H1 (cell line): ENCODE measurements at regions of chr1 and their contacts with region 1.

Region 1: DNA sequence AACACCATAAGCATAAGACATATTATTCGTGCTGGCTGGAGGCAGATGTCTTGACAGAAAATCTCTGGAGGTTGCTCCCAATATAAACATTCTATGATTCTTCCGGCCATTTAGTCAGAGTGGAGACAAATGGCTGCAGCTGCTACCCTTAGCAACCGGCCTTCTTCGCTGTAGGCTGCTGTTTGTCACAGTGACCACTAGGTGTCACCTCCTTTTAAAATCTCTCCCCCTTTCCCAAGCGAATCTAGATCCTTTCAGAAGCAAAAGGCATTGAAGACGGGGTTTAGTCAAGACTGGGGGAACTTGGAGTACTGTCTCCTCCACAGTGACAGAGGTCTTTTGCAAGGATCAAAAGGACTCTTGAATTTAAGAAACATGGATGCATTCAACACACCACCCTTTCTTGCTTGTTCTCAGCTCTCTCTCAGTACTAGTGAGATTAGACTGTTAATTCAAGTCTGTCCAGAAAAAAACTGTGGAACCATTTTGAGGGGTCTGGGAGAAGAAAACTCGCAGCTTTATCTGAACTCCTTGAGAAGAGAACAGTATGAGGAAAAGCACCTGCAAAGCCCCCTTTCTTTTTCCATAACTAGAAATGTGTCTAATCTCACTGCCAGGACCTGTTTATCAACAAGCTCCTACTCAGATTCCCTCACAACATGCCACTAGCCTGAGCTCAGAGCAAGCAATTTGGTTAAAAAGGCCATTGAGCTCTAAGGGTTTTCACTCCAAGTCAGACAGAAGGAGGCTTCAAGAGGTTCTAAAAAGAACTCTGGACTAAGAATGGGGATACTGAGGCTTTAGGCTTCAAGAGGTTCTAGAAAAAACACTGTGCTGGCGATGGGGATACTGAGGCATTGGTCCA is 408.3 kb upstream of the PLXNA2 start:
- DNase-seq: peak; percentile 25 to 53
- H3K4me3 ChIP-seq: no peak overlapping the region
- H3K27ac ChIP-seq: no peak overlapping the region
- H3K4me1 ChIP-seq: no peaks in the 10 kb centered on the region
- H3K27me3 ChIP-seq: no peaks in the 10 kb centered on the region; a peak in 1 of 7 replicates
- CTCF ChIP-seq: peak; percentile 59 to 89 (median 66)
- EP300 ChIP-seq: no peak
- POLR2A ChIP-seq: no peak
- RAD21 ChIP-seq: peak; percentile 80 to 81

Region 2: DNA sequence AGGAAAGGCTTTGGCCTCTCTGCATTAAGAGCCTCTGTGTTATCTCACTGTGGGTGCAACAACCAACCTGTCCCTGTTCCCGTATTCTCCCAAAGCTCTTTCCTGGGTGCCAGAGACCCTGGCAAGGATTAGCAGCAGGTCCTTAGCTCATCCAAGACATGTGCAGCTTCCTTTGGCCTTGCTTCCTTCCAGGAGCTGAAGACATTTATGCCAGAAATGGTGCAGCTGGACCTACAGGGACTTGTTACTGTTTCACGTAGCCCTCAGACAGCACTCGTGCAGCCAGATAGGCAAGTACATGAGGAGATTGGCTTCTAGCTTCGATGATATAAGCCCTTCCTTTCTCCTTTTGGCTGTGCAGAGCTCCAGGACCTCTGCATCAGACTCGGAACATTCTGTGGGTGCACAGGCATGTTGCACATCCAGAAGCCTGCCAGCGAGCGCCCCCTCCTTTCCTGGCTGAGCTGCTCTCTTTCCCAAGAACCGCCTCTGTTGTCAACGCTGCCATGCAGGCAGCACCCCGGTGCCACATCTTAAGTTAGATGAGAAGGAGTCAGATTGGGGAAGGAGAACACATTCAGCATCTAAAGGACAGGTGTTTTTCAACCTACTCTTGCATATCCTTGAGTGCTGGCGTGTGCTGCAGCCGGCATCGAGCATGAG is 123.8 kb before region 1 on chr1:
- CTCF ChIA-PET with region 1: interaction called, 12 read pairs
- POLR2A ChIA-PET with region 1: no interaction called
- DNase-seq: peak in 1 of 2 experiments; percentile 45
- H3K4me3 ChIP-seq: no peak overlapping the region
- H3K27ac ChIP-seq: no peak overlapping the region
- H3K4me1 ChIP-seq: peaks cover 0 to 3% (median 1%) of the 10 kb centered on the region in 4 experiments; a peak in 3 of 7 replicates
- H3K27me3 ChIP-seq: no peaks in the 10 kb centered on the region
- CTCF ChIP-seq: no peak
- EP300 ChIP-seq: no peak
- POLR2A ChIP-seq: no peak
- RAD21 ChIP-seq: 0 out of 4 replicates have a peak, but pooled peaks of 1 of the 2 experiments have one; percentile 8

Region 3: GRCh38 chr1:208641579-208642280 is 10.8 kb before region 1 on chr1:
- CTCF ChIA-PET with region 1: interaction called, 24 read pairs
- POLR2A ChIA-PET with region 1: no interaction called
- DNase-seq: no peak
- H3K4me3 ChIP-seq: no peak overlapping the region
- H3K27ac ChIP-seq: no peak overlapping the region
- H3K4me1 ChIP-seq: no peaks in the 10 kb centered on the region
- H3K27me3 ChIP-seq: no peaks in the 10 kb centered on the region; a peak in 1 of 7 replicates
- CTCF ChIP-seq: no peak
- EP300 ChIP-seq: no peak
- POLR2A ChIP-seq: no peak
- RAD21 ChIP-seq: no peak

Region 4: DNA sequence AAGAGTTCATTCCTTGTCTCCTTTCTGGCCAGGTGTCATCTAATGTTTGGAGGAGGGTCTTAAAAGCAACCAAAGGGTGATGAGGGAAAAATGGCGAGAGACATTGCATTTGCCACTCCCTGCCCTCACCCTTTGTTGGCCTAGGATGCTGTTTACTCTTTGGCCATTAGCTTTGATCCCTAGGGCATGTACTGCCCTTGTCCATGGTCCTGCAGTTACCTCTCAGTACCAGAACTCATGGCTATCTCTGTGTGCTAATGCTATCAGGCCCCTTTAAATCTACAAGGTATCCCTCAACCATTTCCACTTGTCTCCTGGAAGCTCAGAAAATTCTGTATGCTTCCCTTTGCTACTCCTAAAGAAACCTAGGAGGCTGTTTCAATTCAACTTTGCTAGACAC is 16.5 kb after region 1 on chr1:
- CTCF ChIA-PET with region 1: interaction called, 26 read pairs
- POLR2A ChIA-PET with region 1: no interaction called
- DNase-seq: no peak
- H3K4me3 ChIP-seq: no peak overlapping the region
- H3K27ac ChIP-seq: no peak overlapping the region
- H3K4me1 ChIP-seq: no peaks in the 10 kb centered on the region
- H3K27me3 ChIP-seq: no peaks in the 10 kb centered on the region
- CTCF ChIP-seq: no peak
- EP300 ChIP-seq: no peak
- POLR2A ChIP-seq: no peak
- RAD21 ChIP-seq: no peak

Region 5: GRCh38 chr1:208766832-208767231 is 114.3 kb after region 1 on chr1:
- CTCF ChIA-PET with region 1: no interaction called
- POLR2A ChIA-PET with region 1: no interaction called
- DNase-seq: no peak
- H3K4me3 ChIP-seq: no peak overlapping the region
- H3K27ac ChIP-seq: no peak overlapping the region
- H3K4me1 ChIP-seq: no peaks in the 10 kb centered on the region
- H3K27me3 ChIP-seq: no peaks in the 10 kb centered on the region
- CTCF ChIP-seq: no peak
- EP300 ChIP-seq: no peak
- POLR2A ChIP-seq: no peak
- RAD21 ChIP-seq: no peak

Region 6: DNA sequence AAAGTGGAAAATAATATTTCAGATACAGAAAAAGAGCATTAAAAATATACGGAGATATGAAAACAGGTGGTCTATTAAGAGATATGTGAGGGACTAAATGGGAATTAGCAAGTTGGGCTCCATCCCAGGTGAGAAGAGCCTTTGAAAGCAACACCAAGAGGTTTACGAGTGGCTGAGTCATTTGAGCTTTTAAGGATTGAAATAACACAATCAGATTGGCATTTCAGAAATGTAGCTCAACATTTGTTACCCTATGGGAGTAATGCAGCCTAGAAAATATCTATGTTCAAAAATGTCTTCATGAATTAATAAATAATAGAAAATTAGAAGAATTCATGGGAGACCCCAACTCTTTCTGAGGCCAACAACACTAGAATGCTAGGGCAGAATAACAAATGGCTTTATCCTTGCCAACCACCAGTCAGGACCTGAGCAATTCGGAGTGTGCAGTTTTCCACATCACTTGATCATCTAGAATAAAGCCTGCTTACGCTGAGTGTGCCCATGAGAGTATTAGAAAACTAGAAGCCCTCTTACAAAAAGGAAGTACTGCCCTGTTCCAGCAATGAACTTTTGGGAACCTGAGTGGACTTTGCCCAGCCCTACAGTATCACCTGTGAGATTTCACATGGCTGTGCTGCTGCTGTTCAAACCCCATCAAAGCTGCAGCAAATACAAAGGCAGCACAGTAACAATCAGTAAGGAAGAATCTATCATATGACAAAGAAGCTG is 393.0 kb after region 1 on chr1:
- CTCF ChIA-PET with region 1: interaction called, 15 read pairs
- POLR2A ChIA-PET with region 1: no interaction called
- DNase-seq: no peak
- H3K4me3 ChIP-seq: no peak overlapping the region
- H3K27ac ChIP-seq: no peak overlapping the region
- H3K4me1 ChIP-seq: no peaks in the 10 kb centered on the region; a peak in 1 of 7 replicates
- H3K27me3 ChIP-seq: peaks cover 0 to 7% (median 1%) of the 10 kb centered on the region in 4 experiments; a peak in 2 of 7 replicates
- CTCF ChIP-seq: no peak
- EP300 ChIP-seq: no peak
- POLR2A ChIP-seq: no peak
- RAD21 ChIP-seq: no peak